OCI-LY7 (cell line): ENCODE measurements at regions of chr22 and their contacts with region 1.

Region 1: GRCh38 chr22:20156611-20157429 is 6.0 kb upstream of the CCDC188 start:
- DNase-seq: peak; percentile 75
- H3K4me3 ChIP-seq: no peak overlapping the region
- H3K27ac ChIP-seq: no peak overlapping the region
- H3K4me1 ChIP-seq: no peaks in the 10 kb centered on the region
- CTCF ChIP-seq: peak; percentile 89

Region 2: DNA sequence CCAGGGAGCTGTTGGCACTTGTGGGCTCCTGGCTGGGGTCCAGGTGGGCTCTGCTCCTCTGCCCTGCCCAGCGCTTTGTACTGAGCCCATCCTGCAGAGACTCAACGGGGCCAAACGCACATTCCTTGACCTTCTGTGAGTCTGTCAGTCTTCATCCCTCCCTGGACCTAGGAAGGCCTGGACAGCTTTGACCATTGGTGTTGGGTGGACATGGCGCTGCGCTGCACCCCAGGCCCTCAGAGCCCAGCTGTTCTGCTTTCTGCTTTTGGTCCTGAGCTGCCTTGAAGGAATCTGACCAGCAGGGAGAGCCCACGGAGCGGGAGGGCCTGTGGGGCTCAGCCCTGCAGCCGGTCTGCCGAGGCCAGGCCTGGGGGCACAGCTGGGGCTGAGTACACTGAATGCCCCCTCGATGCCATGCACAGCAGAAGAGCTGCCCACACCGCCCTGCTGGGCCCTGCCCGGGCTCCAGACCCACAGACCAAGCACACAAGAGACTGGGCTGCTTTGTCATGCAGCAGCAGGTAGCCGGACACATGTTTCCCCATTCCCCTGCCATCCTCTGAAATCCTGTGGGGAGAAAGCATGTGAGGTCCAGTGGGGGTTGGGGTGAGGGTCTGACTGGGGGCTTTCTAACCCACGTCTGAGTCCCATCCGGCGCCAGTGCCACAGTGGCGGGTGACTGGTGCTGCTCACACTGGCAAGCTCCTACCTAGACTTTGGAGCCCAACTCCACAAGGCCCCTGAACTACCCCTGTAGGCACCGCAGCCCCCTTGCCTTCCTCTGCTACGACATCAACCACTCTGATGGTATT is 18.2 kb after region 1 on chr22:
- CTCF ChIA-PET with region 1: no interaction called
- POLR2A ChIA-PET with region 1: no interaction called
- intact Hi-C with region 1: no loop called
- DNase-seq: no peak
- H3K4me3 ChIP-seq: no peak overlapping the region
- H3K27ac ChIP-seq: no peak overlapping the region
- H3K4me1 ChIP-seq: no peaks in the 10 kb centered on the region
- CTCF ChIP-seq: no peak

Region 3: DNA sequence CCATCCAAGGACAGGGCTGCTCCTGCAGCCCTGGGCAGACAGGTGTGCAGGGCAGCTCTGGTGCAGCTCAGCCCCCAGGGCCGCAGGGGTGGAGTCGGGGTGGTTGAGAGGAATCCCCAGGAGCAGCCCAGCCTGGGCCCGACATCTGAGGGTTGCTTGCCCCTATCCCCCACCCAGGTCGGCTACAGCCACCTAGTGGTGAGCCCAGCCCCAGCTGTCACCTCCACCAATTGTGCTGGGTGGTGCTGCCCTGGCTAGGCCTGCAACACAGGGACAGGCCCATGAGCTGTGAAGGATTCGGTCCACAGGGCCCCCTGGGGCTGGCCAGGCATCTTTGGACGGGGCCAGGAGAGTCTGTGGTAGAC is 81.7 kb after region 1 on chr22:
- CTCF ChIA-PET with region 1: interaction called, 4 read pairs
- POLR2A ChIA-PET with region 1: no interaction called
- intact Hi-C with region 1: loop called (anchors 1 kb)
- DNase-seq: peak; percentile 63
- H3K4me3 ChIP-seq: no peak overlapping the region
- H3K27ac ChIP-seq: no peak overlapping the region
- H3K4me1 ChIP-seq: peaks cover 4% of the 10 kb centered on the region
- CTCF ChIP-seq: peak; percentile 79

Region 4: DNA sequence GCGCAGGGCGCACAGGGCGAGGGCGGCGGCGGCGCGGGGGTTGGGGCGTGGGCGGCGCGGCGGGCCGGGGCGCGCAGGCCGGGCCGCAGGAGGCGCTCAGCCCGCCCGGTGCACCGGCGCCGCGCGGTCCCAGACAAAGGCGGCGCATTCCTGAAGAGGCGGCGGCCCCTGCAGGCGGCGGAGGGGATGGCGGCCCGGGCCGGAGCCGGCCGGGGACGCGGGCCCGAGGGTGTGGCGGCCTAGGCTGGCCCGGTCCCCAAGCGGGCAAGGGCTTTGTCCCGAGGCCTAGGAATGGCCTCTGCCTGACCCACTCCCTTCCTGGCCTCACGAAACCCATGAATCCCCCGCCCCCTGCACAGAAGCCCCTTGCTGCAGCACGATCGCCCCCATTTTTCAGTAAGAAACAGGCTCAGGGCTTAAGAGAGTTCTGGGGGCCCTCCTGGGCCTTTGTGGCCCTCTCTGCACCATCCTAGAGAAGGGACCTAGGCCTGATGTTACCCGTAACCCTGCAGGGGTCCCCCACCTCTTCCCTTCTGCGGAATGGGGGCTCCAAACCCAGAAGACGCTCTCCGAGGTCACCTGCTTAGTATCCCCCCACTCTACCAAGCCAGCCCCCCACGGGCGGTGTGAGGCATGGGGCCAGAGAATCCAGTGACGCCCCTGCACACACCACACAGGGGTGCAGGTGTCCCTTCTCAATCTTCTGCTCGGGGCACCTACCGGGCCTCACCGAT is 111.6 kb after region 1 on chr22 and contains the start of gene RTN4R:
- CTCF ChIA-PET with region 1: no interaction called
- POLR2A ChIA-PET with region 1: no interaction called
- intact Hi-C with region 1: loop called (anchors 1 kb)
- DNase-seq: peak; percentile 58
- H3K4me3 ChIP-seq: peak within 1 kb of the TSS; percentile 22
- H3K27ac ChIP-seq: no peak within 1 kb of the TSS
- H3K4me1 ChIP-seq: no peaks in the 10 kb centered on the region
- CTCF ChIP-seq: peak; percentile 63
- total RNA-seq, gene RTN4R: not detected in 2 replicates

Region 5: DNA sequence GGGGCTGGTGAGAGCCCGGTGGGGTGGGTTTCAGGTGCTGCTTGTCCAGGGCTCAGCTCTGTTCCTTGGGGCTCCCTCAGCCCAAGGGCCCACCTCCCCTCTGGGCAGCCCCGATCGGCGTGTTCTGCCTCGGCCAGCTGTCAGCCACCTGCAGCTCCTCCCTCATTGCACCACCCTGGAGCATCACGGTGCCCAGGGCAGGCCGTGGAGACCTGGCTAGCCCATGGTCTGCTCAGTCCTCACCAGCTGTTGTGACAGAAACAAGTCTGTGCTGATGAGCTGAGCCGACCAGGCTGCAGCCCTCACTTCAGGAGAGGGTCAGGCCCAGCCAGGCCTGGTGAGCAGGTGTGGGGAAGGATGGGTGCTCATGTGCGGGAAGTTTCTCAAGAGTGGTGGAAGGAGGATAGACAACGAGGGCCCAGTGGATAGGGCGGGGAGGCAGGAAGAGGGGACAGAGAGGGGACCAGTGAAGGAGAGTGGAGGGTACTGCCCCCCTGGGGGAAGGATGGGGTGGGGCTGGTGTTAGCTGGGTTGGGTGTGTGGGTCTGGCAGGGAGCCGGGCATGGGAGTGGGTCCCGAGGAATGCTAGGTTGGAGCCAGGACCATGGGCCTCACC is 127.8 kb after region 1 on chr22:
- CTCF ChIA-PET with region 1: no interaction called
- POLR2A ChIA-PET with region 1: no interaction called
- intact Hi-C with region 1: loop called (anchors 1 kb)
- DNase-seq: no peak
- H3K4me3 ChIP-seq: no peak overlapping the region
- H3K27ac ChIP-seq: no peak overlapping the region
- H3K4me1 ChIP-seq: no peaks in the 10 kb centered on the region
- CTCF ChIP-seq: no peak

Region 6: GRCh38 chr22:20456064-20456721 is 299.4 kb after region 1 on chr22:
- CTCF ChIA-PET with region 1: no interaction called
- POLR2A ChIA-PET with region 1: no interaction called
- intact Hi-C with region 1: loop called (anchors 10 kb)
- DNase-seq: peak; percentile 85
- H3K4me3 ChIP-seq: no peak overlapping the region
- H3K27ac ChIP-seq: no peak overlapping the region
- H3K4me1 ChIP-seq: peaks cover 6% of the 10 kb centered on the region
- CTCF ChIP-seq: peak; percentile 93